Caco-2 (cell line): ENCODE measurements at regions of chr10 and their contacts with region 1.

Region 1: GRCh38 chr10:27360581-27361172 is 120.1 kb upstream of the ACBD5 start:
- DNase-seq: peak; percentile 81 to 89
- H3K4me3 ChIP-seq: no peak overlapping the region
- H3K4me3 Mint-ChIP-seq: no peak overlapping the region
- H3K27ac Mint-ChIP-seq: no peak overlapping the region
- H3K4me1 ChIP-seq: no peaks in the 10 kb centered on the region
- H3K4me1 Mint-ChIP-seq: no peaks in the 10 kb centered on the region
- H3K27me3 ChIP-seq: no peaks in the 10 kb centered on the region
- H3K27me3 Mint-ChIP-seq: peaks cover 3% of the 10 kb centered on the region
- CTCF ChIP-seq: peak; percentile 98 to 99

Region 2: GRCh38 chr10:27223964-27224363 is 136.7 kb before region 1 on chr10:
- CTCF ChIA-PET with region 1: no interaction called
- POLR2A ChIA-PET with region 1: no interaction called
- intact Hi-C with region 1: loop called (anchors 2 kb)
- DNase-seq: peak; percentile 51 to 66
- H3K4me3 ChIP-seq: no peak overlapping the region
- H3K4me3 Mint-ChIP-seq: no peak overlapping the region
- H3K27ac Mint-ChIP-seq: no peak overlapping the region
- H3K4me1 ChIP-seq: no peaks in the 10 kb centered on the region
- H3K4me1 Mint-ChIP-seq: no peaks in the 10 kb centered on the region
- H3K27me3 ChIP-seq: no peaks in the 10 kb centered on the region
- H3K27me3 Mint-ChIP-seq: no peaks in the 10 kb centered on the region
- CTCF ChIP-seq: peak; percentile 59 to 61

Region 3: DNA sequence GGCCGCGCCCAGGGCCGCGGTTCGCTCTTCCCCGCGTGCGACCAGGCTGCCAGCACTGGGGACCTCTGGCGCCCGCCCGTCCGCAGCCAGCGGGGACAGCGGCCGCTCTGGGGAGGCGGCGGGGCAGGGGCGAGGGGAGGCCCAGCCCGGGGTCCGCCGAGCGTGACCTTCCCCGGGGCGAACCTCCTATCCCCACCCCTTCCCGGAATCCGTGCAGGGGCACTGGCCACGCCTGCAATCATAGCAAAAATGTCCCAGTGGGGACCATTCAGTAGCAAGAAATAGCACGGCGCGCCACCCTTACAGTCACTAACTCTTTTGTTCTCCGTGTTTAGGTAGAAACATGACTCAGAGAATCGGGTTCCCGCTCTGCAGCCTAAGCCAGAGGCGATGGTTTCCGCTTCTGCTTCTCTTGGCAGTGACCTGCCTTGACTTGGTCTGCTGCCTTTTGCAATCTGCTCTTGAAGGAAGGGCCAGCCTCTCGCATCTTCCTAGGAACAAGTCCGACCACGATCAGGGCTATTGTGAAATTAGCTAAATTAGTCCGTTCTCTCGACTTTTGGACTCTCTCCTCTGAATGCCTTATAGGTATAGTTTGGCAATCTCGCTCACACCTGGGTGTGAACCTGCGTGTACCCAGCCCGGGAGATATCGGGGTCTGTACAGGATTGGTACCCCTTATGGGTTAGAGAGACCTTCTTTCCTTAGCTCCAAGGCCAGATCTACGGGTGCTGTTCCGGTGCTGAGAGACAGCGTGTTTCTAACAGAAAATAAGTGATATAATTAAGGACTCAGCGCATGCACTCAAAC is 40.7 kb before region 1 on chr10:
- CTCF ChIA-PET with region 1: no interaction called
- POLR2A ChIA-PET with region 1: no interaction called
- intact Hi-C with region 1: loop called (anchors 1 kb)
- DNase-seq: peak; percentile 65 to 69
- H3K4me3 ChIP-seq: peak overlapping the region; percentile 40
- H3K4me3 Mint-ChIP-seq: peak overlapping the region; percentile 80
- H3K27ac Mint-ChIP-seq: no peak overlapping the region
- H3K4me1 ChIP-seq: no peaks in the 10 kb centered on the region
- H3K4me1 Mint-ChIP-seq: peaks cover 10% of the 10 kb centered on the region
- H3K27me3 ChIP-seq: no peaks in the 10 kb centered on the region
- H3K27me3 Mint-ChIP-seq: peaks cover 6% of the 10 kb centered on the region
- CTCF ChIP-seq: no peak